Breast epithelium (tissue), 4 donors: ENCODE measurements at regions of chr3 and their contacts with region 1.

Region 1: DNA sequence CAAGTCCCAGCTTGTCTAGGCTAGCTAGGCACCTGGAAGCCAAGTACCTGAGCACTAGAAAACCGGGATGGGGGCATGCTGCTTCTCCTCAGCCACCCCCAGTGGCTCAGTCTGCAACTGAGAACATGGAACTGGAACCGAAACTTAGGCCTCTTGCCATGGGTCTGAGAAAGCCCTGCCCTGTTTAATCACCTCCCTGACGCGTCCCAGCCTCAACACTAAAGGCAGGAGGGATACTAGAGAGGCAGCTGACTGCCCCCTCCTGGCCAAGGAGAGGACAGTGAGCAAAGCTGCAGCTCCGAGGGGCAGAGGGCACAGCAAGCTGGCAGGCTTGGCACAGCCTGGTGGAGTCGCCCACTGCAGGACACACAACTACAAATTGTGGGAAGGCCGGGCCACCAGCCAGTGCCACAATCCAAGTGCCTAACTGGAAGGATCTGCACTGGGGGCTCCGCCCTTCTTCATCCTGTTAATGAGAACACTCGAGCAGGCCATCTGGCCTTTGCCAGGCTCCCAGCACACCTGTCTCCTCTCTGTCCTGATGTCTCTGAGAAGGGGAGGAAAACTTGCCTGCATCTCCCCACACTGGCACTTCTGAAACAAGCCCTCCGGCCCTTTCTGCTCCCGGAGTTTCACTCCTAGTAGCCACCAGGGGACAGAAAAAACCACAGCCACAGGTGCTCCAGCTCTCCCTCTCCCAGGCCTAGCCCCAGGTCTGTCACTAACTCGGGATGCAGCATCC is 53.7 kb downstream of the BDH1 start:
- DNase-seq: peak in 1 of 2 donors; percentile 41
- H3K4me3 ChIP-seq: no peak overlapping the region
- H3K27ac ChIP-seq: peak overlapping the region in 1 of 2 donors; percentile 17
- H3K4me1 ChIP-seq: no peaks in the 10 kb centered on the region
- H3K27me3 ChIP-seq: no peaks in the 10 kb centered on the region
- CTCF ChIP-seq: peak; percentile 17 to 71 (median 34)
- POLR2A ChIP-seq: no peak

Region 2: GRCh38 chr3:197270558-197271317 is 231.3 kb before region 1 on chr3:
- intact Hi-C with region 1: loop called (anchors 10 kb)
- DNase-seq: no peak
- H3K4me3 ChIP-seq: no peak overlapping the region
- H3K27ac ChIP-seq: no peak overlapping the region
- H3K4me1 ChIP-seq: no peaks in the 10 kb centered on the region
- H3K27me3 ChIP-seq: no peaks in the 10 kb centered on the region
- CTCF ChIP-seq: no peak
- POLR2A ChIP-seq: no peak